ENCODE measurements at regions of chr20 and their contacts with region 1.

Region 1: GRCh38 chr20:51447097-51447771 is 95.3 kb downstream of the NFATC2 start:
- DNase-seq: peak; percentile 44
- H3K4me3 ChIP-seq: no peak overlapping the region
- H3K27ac ChIP-seq: peak overlapping the region; percentile 33 to 59 (median 52)
- H3K4me1 ChIP-seq: peaks cover 0 to 42% (median 14%) of the 10 kb centered on the region in 4 donors
- H3K27me3 ChIP-seq: no peaks in the 10 kb centered on the region
- CTCF ChIP-seq: no peak
- EP300 ChIP-seq: no peak
- POLR2A ChIP-seq: no peak

Region 2: DNA sequence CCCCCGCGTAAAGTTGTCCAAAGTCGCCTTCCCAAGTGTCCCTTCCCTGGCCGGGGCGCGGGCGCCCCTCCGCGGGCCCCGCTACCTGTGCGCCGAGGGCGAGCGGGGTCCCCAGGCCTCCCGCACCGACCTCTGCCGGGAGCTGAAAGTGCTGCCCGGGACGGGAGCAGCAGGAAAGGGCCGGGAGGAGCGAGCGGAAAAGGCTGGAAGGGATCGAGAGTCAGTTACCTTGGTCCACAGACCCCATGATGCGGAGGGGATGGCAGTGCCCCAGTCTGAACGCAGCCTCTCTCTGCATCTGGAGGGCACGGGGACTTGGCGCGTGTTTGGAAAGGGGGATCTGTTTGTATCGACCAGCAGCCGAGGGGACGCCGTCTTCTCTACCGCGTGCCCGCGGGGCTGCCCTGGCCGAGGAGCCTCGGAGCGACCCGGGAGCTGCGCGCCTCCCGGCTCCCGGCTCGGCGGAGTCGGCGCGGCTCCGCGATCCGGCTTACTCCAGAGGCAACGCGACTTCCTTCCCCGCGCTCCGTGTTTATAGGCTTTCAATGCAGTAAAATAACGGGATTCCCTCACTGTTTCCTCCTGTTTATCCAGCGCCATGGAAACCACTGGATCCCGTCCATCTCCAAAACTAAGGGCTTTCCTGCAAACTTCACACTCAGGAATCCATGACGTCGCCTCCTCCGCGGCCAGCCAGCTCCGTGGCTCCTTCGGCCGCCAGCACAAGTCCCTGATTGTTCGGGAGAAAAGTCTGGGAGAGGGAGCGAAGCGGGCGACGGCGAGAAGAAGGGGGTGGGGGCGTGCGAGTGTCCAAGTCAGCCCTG is 115.3 kb after region 1 on chr20:
- in situ Hi-C with region 1: no loop called
- intact Hi-C with region 1: loop called (anchors 10 kb)
- DNase-seq: peak; percentile 71
- H3K4me3 ChIP-seq: peak overlapping the region; percentile 31 to 51 (median 38)
- H3K27ac ChIP-seq: peak overlapping the region; percentile 84 to 89 (median 86)
- H3K4me1 ChIP-seq: peaks cover 10 to 49% (median 31%) of the 10 kb centered on the region in 4 donors
- H3K27me3 ChIP-seq: peaks cover 66% of the 10 kb centered on the region
- CTCF ChIP-seq: peak in 1 of 5 experiments; percentile 16
- EP300 ChIP-seq: peak; percentile 11
- POLR2A ChIP-seq: peak; percentile 82